GM10248 (cell line): ENCODE measurements at regions of chr19 and their contacts with region 1.

Region 1: GRCh38 chr19:12938234-12939025 is at the start of gene CALR:
- DNase-seq: peak; percentile 97
- CTCF ChIP-seq: peak; percentile 3

Region 2: GRCh38 chr19:12907166-12907565 is 31.3 kb before region 1 on chr19:
- CTCF ChIA-PET with region 1: no interaction called
- POLR2A ChIA-PET with region 1: interaction called, 13 read pairs
- DNase-seq: no peak
- CTCF ChIP-seq: no peak

Region 3: GRCh38 chr19:13132471-13133180 is 194.2 kb after region 1 on chr19:
- CTCF ChIA-PET with region 1: no interaction called
- POLR2A ChIA-PET with region 1: interaction called, 10 read pairs
- DNase-seq: no peak
- CTCF ChIP-seq: no peak